Lower leg skin (tissue), 4 donors: ENCODE measurements at regions of chr7 and their contacts with region 1.

Region 1: DNA sequence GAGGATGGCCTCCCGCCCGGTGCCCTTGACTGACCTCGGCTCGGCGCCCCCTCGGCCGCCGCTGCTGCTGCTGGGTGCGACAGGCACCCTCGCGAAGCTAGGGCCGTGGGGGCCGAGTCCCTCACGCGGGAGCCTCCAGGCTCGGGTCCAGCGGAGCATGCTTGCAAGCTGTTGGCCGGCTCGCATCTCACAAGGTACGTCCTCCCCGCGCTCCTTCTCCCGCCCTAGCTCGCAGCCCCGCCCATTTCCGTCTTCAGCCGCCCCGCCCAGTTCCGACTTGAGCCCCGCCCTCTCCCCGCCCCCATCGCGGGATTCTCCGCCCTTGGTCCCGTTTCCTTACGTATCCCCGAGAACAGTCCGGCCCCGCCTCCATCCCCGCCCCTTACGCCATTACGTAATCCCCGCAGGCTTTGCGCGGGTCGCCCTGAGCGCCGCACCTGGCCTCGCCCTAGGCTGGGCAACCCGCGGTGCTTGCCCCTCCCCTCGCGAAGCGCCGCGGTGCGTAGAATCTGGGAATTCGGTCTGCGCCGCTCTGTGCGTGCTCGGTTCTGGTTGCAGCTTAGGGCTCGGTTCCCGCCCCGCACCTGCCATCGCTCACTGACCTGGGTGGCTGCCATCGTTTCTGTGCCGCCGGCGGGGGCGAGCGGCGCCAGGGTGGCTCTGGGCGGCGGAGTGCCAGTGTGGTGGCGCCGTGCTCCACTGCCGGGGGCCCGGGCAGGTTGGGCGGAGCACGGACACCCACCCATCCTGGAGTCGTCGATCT is at the start of gene ABHD11:
- DNase-seq: peak; percentile 98 to 100
- H3K4me3 ChIP-seq: peak within 1 kb of the TSS; percentile 56
- CTCF ChIP-seq: no peak
- POLR2A ChIP-seq: peak in 1 of 2 donors; percentile 48
- total RNA-seq, gene ABHD11: 24.9 to 29.0 (median 26.3) TPM

Region 2: GRCh38 chr7:73703757-73704639 is 34.8 kb before region 1 on chr7:
- intact Hi-C with region 1: no loop called
- DNase-seq: no peak
- H3K4me3 ChIP-seq: no peak overlapping the region
- CTCF ChIP-seq: no peak
- POLR2A ChIP-seq: no peak

Region 3: GRCh38 chr7:73842247-73842895 is 103.6 kb after region 1 on chr7 and contains the start of gene METTL27:
- intact Hi-C with region 1: loop called (anchors 5 kb)
- DNase-seq: peak; percentile 94 to 99
- H3K4me3 ChIP-seq: peak within 1 kb of the TSS; percentile 58
- CTCF ChIP-seq: no peak
- POLR2A ChIP-seq: peak in 1 of 2 donors; percentile 67
- total RNA-seq, gene METTL27: 2.0 to 7.4 (median 4.3) TPM

Region 4: GRCh38 chr7:73858807-73859206 is 120.0 kb after region 1 on chr7:
- intact Hi-C with region 1: loop called (anchors 5 kb)
- DNase-seq: no peak
- H3K4me3 ChIP-seq: no peak overlapping the region
- CTCF ChIP-seq: no peak
- POLR2A ChIP-seq: no peak

Region 5: DNA sequence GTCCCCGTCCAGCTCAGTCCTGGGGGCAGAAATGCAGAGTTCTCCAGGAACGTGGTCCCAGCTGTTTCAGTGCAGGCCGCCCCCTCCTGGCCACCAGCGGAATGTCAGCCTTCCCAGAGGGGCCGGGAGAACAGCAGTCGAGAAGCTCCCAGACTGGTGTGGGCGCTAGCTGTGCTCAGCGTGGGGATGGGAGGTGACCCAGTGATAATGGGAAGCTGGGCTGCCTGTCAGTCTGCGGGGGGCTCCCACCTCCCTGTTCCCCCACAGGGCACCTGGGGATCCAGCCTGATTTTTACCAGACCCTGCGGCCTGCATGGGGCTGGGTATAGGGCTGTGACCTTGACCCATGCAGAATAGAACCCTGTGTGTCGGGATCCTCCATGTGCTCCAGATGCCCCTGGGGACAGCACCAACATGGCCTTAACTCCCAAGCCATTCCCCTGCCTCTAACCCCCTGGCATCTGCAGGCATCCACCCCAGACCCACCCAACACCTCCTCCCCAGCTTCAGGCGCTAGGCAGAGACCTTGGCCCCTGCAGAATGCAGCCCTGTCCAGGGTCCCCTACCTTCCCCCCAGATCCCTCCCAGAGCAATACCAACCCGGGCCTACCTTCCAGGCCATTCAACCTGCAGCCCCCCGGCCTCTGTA is 288.2 kb after region 1 on chr7:
- intact Hi-C with region 1: no loop called
- DNase-seq: peak; percentile 78 to 97
- H3K4me3 ChIP-seq: no peak overlapping the region
- CTCF ChIP-seq: peak in 1 of 3 donors; percentile 90
- POLR2A ChIP-seq: no peak